ENCODE measurements at regions of chr19 and their contacts with region 1.

Region 1: GRCh38 chr19:13861732-13862531 is 15.0 kb upstream of the NANOS3 start:
- DNase-seq: peak; percentile 91
- H3K4me3 Mint-ChIP-seq: peak overlapping the region; percentile 82
- H3K27ac Mint-ChIP-seq: peak overlapping the region; percentile 85
- H3K4me1 Mint-ChIP-seq: peaks cover 45% of the 10 kb centered on the region
- H3K27me3 Mint-ChIP-seq: peaks cover 58% of the 10 kb centered on the region

Region 2: DNA sequence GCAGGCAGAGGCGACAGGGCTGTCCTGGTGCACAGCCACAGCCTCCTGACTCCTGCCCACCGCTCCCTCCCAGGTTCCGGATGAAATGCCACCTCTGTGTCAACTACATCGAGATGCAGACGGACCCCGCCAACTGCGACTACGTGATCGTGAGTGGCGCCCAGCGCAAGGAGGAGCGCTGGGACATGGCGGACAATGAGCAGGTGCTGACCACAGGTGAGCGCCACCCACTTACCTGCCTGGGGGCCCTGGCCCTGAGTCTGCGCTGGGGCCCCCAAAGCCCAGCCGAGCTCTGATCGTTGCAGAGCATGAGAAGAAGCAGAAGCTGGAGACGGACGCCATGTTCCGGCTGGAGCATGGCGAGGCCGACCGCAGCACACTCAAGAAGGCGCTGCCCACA is 103.1 kb before region 1 on chr19:
- CTCF ChIA-PET with region 1: no interaction called
- DNase-seq: no peak
- H3K4me3 Mint-ChIP-seq: no peak overlapping the region
- H3K27ac Mint-ChIP-seq: no peak overlapping the region
- H3K4me1 Mint-ChIP-seq: peaks cover 3% of the 10 kb centered on the region
- H3K27me3 Mint-ChIP-seq: no peaks in the 10 kb centered on the region

Region 3: DNA sequence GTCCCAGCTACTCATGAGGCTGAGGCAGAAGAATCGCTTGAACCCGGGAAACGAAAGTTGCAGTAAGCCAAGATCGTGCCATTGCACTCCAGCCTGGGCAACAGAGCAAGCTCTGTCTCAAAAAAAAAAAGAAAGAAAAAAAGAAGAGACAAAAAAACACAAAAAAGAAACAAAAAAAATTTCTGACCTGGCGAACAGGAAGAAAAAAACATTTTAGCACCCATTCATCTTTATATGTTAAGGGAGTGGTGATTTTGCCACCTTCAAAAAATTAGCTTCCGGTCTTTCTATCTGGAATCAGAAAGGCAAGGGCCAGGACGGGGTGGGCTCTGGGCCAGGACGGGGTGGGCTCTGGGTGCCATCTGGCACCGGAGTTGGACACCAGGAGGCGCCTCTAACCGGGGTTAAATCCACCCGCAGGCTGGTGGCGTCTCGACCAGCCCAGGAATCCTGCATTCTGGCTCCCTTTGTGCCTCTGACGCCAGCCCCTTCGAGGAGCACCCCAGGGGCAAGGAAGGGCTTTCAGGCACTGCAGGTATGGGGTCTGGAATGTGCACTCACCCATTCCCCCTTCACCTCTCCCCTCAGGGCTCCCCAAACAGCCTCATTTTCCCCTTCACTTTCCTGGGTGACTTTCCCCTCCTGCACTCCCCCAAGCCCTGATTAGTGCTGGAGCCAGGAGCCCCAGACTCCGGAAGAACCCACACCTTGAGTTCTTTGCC is 77.0 kb before region 1 on chr19:
- CTCF ChIA-PET with region 1: interaction called, 150 read pairs
- DNase-seq: peak; percentile 81
- H3K4me3 Mint-ChIP-seq: peak overlapping the region; percentile 41
- H3K27ac Mint-ChIP-seq: peak overlapping the region; percentile 45
- H3K4me1 Mint-ChIP-seq: peaks cover 48% of the 10 kb centered on the region
- H3K27me3 Mint-ChIP-seq: no peaks in the 10 kb centered on the region

Region 4: DNA sequence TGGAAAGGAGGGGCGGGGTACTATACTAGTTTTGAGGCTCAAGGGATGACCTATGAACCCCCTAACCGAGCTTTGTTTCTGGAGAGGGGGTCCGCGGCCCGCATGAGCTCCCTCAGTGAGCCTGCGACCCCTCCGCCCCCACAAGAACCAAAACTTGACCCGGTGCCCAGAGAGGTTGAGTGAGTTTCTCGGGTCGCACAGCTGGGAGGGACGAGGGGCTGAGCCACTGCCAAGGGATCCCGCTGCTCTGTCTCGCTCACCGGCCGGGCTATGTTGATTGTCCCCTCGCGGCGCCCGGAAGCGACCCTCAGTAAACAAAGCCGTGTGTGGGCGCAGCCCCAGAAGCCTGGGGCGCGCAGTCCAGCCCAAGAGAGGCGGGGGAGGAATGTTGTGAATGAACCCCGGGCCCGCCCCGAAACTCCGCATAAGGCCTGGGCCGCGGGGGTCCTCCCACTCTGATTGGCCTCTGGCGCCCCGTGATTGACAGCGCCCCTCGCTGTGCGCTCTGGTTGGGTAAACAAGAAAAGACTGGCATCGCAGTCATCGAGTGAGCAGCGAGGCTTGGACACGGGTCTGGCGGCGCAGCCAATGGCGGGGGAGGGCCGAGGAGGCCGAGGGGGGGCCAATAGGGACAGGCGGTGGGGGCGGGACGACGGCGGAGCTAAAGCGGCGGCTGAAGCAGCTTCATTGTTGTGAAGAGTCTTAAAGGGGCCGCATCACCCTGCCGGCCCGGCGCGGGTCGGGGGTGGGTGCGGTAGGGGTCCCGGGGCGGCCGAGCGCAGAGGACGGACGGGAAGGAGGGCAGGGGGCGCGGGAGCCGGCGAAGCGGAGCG is 67.0 kb before region 1 on chr19 and contains the start of gene ZSWIM4:
- CTCF ChIA-PET with region 1: interaction called, 150 read pairs
- DNase-seq: peak; percentile 99
- H3K4me3 Mint-ChIP-seq: peak within 1 kb of the TSS; percentile 98
- H3K27ac Mint-ChIP-seq: peak within 1 kb of the TSS; percentile 96
- H3K4me1 Mint-ChIP-seq: peaks cover 39% of the 10 kb centered on the region
- H3K27me3 Mint-ChIP-seq: no peaks in the 10 kb centered on the region

Region 5: DNA sequence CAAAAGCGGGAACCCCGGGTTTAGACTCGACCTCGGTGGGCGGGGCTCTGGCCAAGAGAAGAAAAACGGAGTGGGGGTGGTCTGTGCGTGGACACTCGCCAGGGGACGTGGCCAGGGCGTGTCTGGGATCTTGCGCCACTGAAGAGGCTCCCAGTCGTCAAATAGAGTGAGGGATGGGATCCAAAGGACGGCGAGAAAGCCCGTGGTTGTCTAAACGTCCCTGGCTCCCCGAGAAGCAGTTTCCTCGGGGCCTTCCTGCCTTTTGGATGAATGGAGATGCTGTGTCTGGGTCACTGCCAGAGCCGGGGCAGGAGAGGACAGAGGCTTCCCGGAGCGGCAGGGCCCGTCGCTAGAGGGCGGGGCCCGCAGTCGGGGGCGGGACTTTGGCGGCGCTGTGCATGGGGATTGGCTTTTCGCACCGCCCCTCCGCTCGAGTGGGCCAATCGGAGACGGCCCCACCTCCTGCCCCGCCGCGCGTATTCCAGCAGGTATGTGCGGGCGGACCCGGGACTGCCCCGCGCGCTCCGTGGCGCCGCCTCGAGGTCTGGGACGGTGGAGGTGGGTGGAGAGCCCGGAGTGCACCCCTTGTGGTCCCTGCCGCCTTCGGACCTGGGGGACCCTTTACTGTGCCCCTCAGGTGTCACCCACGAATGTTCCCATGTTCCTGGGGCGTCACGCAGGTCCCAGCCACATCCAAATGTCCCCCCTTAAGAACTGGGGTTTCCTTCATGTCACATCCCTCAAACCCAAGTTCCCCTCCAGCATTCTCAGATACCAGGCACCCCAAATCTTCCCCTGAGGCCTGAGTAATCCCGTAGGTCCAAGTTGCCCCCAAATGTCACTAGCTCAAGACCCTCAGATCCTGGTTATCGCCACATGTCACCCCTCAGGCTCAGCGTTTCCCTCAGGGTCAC is 28.3 kb before region 1 on chr19:
- CTCF ChIA-PET with region 1: interaction called, 15 read pairs
- DNase-seq: peak; percentile 96
- H3K4me3 Mint-ChIP-seq: peak overlapping the region; percentile 74
- H3K27ac Mint-ChIP-seq: peak overlapping the region; percentile 85
- H3K4me1 Mint-ChIP-seq: peaks cover 52% of the 10 kb centered on the region
- H3K27me3 Mint-ChIP-seq: no peaks in the 10 kb centered on the region

Region 6: DNA sequence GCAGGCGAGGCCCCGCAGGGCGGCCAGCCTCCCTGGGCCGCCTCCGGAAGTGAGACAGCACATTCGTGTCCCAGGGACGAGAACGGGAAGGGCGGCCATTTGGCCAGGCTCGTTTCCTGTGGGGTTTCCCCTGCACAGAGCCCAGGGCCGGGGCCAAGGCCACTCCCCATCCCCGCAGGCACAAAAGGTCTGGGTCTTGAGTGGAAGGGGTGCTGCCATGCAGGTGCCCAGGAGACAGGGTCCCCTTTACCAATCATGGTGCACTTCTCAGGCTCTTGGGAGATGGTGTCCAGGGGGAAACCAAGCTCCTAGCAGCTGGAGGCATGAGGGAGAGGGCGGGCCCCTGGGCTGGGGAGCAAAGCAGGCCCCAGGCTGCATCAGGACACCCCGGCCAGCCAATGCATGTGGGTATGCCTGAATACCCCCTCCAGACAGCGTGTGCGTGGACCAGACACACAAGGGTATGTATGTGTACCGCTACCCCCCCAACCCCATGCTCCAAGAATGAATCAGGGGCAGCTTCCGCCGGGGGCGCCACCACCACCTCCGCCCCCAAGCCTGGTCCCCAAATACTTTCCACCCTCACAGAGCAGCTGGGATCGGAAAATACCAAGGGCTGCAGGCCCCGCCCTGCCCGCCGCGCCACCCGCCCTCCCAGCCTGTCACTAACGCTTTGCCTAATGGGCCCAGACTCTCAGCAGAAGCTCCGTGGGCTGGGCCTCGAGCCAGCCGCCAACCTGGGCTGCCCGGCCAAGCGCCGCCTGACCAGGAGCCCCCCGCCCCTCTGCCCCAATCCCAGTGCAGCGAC is 22.6 kb before region 1 on chr19:
- CTCF ChIA-PET with region 1: interaction called, 15 read pairs
- DNase-seq: peak; percentile 89
- H3K4me3 Mint-ChIP-seq: peak overlapping the region; percentile 93
- H3K27ac Mint-ChIP-seq: peak overlapping the region; percentile 97
- H3K4me1 Mint-ChIP-seq: peaks cover 76% of the 10 kb centered on the region
- H3K27me3 Mint-ChIP-seq: no peaks in the 10 kb centered on the region

Region 7: DNA sequence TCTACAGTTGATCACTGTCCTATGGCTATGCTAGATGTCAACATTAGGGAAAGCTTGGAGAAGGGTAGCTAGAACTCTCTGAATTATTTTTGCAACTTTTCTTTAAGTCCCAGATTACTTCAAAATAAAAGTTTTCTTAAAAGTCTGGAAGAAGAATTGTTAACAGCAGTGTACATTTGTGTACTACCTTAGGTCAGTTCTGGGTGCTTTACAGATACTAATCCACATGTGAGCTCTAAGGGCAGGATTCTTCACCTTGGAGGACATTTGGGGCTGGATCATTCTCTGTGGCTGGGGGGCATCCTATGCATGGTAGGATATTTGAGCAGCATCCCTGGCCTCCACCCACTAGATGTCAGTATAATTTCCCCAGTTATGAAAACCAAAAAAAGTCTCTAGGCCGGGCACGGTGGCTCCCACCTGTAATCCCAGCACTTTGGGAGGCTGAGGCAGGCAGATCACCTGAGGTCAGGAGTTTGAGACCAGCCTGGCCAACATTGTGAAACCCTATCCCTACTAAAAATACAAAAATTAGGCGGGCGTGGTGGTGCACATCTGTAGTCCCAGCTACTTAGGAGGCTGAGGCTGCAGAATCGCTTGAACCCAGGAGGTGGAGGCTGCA is 41.2 kb after region 1 on chr19:
- CTCF ChIA-PET with region 1: no interaction called
- DNase-seq: peak; percentile 53
- H3K4me3 Mint-ChIP-seq: no peak overlapping the region
- H3K27ac Mint-ChIP-seq: peak overlapping the region; percentile 45
- H3K4me1 Mint-ChIP-seq: peaks cover 41% of the 10 kb centered on the region
- H3K27me3 Mint-ChIP-seq: no peaks in the 10 kb centered on the region

Region 8: DNA sequence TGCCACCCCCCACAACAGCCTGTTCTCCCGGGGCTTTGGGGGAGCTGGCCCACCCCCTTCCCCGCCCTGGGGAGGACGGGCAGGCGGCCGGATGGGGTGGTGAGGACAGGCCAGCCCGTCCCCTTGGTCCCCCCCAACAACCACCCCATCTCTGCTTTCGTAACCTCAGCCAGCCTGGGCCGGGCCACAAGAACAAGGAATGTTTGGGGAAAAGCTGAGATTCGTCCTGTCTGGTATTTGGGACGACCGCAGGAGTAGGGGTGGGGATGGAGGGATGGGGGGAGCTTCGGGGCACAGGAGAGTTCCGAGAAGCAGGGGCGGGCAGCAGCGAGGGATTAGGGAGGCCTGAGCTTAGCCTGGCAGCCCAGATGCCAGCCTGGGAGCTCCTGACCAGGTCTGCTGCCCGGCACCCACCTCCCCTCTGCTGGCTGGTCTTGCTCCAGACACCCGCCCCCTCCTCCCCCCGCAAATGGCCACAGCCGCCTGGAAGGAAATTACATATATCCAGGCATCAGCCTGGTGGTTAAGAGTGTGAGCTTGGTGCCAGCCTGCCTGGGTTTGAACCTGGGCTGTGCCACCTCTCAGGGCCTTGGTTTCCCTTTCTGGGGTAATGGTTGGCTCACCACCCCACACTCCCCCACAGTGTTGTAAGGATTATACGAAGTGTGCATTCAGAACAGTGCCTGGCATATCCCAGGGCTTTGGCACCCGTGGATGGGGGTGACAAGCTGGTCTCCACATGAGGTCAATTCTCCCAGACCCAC is 76.6 kb after region 1 on chr19 and contains the start of gene PODNL1:
- CTCF ChIA-PET with region 1: no interaction called
- DNase-seq: no peak
- H3K4me3 Mint-ChIP-seq: no peak within 1 kb of the TSS
- H3K27ac Mint-ChIP-seq: no peak within 1 kb of the TSS
- H3K4me1 Mint-ChIP-seq: no peaks in the 10 kb centered on the region
- H3K27me3 Mint-ChIP-seq: peaks cover 55% of the 10 kb centered on the region

Region 9: DNA sequence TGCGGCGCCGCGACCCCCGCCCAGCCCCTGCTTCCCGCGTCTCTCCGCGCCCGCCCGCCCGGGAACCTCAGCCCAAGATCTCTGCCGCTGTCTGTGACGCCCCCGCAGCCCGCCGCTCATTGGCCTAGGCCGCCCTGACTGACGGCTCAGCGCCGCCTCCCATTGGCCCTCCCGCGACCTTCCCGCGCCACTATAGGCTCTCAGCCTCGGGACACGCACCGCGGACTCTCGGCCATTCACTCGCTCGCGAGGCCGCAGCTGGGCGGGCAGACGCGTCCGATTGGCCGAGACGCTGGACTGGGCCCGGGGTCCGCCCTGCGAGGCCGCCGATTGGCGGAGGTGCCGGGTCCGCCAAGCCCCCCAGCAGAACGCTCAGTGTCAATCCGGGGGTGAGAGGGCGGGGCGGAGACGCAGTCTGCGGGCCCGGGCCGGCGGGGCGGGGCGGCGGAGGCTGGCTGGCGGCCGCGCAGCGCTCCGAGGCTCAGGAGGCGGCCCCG is 255.8 kb after region 1 on chr19 and contains the start of gene PRKACA:
- CTCF ChIA-PET with region 1: no interaction called
- DNase-seq: peak; percentile 99
- H3K4me3 Mint-ChIP-seq: peak within 1 kb of the TSS; percentile 87
- H3K27ac Mint-ChIP-seq: peak within 1 kb of the TSS; percentile 88
- H3K4me1 Mint-ChIP-seq: peaks cover 49% of the 10 kb centered on the region
- H3K27me3 Mint-ChIP-seq: no peaks in the 10 kb centered on the region